ENCODE measurements at regions of chr7 and their contacts with region 1.

Region 1: DNA sequence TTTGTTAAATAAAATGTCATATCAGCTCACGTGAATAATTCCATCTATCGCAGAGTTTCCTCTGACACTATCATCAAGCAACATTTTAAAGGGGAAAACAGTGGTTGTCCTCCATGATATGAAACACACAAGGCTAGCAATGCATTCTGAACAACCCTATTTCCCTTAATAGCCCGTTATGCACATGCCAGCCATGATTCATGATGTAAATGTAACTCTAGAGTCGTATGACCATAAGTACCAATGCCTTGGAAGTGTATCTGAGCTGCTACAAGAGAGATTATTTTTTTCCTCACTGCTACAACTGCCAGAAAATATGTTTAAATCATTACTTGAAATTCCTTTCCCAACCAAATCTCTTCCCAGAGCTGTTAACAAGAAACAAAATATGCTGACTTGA is 159.4 kb downstream of the GRM8 start:
- DNase-seq: no peak
- ATAC-seq: no peak
- H3K4me3 Mint-ChIP-seq: no peak overlapping the region
- H3K27ac Mint-ChIP-seq: no peak overlapping the region
- H3K4me1 Mint-ChIP-seq: peaks cover 4% of the 10 kb centered on the region
- H3K27me3 Mint-ChIP-seq: no peaks in the 10 kb centered on the region
- CTCF ChIP-seq: no peak

Region 2: GRCh38 chr7:127107601-127108007 is 14.3 kb after region 1 on chr7:
- CTCF ChIA-PET with region 1: interaction called, 11 read pairs
- POLR2A ChIA-PET with region 1: interaction called, 3 read pairs
- DNase-seq: peak; percentile 66
- ATAC-seq: peak; percentile 96
- H3K4me3 Mint-ChIP-seq: no peak overlapping the region
- H3K27ac Mint-ChIP-seq: no peak overlapping the region
- H3K4me1 Mint-ChIP-seq: no peaks in the 10 kb centered on the region
- H3K27me3 Mint-ChIP-seq: peaks cover 3% of the 10 kb centered on the region
- CTCF ChIP-seq: peak; percentile 41